Common myeloid progenitor, CD34-positive (primary cell): ENCODE measurements at regions of chr6 and their contacts with region 1.

Region 1: GRCh38 chr6:36851149-36851614 is 11.9 kb upstream of the CPNE5 start:
- DNase-seq: peak; percentile 72 to 83 (median 76)
- H3K4me3 ChIP-seq: no peak overlapping the region
- H3K27ac ChIP-seq: no peak overlapping the region
- H3K4me1 ChIP-seq: peaks cover 12 to 50% (median 21%) of the 10 kb centered on the region in 4 experiments
- H3K27me3 ChIP-seq: peaks cover 0 to 3% (median 0%) of the 10 kb centered on the region in 5 experiments

Region 2: GRCh38 chr6:36765594-36766398 is 85.4 kb before region 1 on chr6:
- CTCF ChIA-PET with region 1: interaction called, 189 read pairs
- POLR2A ChIA-PET with region 1: interaction called, 3 read pairs
- DNase-seq: peak; percentile 85 to 91 (median 87)
- H3K4me3 ChIP-seq: no peak overlapping the region
- H3K27ac ChIP-seq: no peak overlapping the region
- H3K4me1 ChIP-seq: peaks cover 5 to 27% (median 21%) of the 10 kb centered on the region in 4 experiments
- H3K27me3 ChIP-seq: no peaks in the 10 kb centered on the region

Region 3: GRCh38 chr6:36780442-36781177 is 70.6 kb before region 1 on chr6:
- CTCF ChIA-PET with region 1: interaction called, 32 read pairs
- POLR2A ChIA-PET with region 1: interaction called, 3 read pairs
- DNase-seq: peak; percentile 28 to 83 (median 79)
- H3K4me3 ChIP-seq: no peak overlapping the region
- H3K27ac ChIP-seq: no peak overlapping the region
- H3K4me1 ChIP-seq: peaks cover 4 to 28% (median 10%) of the 10 kb centered on the region in 4 experiments
- H3K27me3 ChIP-seq: peaks cover 0 to 5% (median 0%) of the 10 kb centered on the region in 5 experiments

Region 4: GRCh38 chr6:36815962-36816735 is 35.0 kb before region 1 on chr6:
- CTCF ChIA-PET with region 1: interaction called, 15 read pairs
- POLR2A ChIA-PET with region 1: no interaction called
- DNase-seq: no peak
- H3K4me3 ChIP-seq: no peak overlapping the region
- H3K27ac ChIP-seq: no peak overlapping the region
- H3K4me1 ChIP-seq: peaks cover 0 to 7% (median 0%) of the 10 kb centered on the region in 4 experiments
- H3K27me3 ChIP-seq: no peaks in the 10 kb centered on the region

Region 5: DNA sequence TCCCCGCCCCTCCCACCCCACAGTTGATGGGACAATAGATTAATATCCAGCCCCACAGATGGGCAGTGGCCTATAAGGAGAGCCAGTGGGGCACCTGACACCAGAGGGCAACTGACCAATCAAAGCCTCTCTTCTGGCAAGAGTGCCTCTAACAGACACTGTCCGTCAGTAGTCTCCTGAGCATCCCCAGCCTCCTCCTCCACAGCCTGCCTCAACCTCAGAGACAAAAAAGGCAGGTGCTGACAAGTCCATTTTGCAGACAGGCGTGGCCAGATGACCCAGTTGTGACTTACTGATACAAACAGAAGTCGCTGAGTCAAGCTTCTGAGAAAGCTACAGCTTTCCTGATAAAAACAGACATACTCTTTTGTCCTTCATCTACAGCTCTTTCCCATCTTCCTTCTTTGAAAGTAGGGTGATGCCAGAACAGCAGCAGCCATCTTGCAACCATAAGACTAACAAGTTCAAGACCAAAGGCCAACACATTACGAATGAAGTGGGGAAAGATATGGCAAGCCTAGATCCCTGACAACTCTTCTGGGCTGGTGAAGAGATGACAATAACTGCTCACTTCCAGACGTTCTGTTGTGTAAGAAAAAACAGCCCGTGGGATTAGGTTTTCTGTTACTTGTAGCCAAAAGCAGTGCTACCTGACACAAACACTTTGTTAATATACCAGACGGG is 11.1 kb after region 1 on chr6:
- CTCF ChIA-PET with region 1: interaction called, 39 read pairs
- POLR2A ChIA-PET with region 1: no interaction called
- DNase-seq: no peak
- H3K4me3 ChIP-seq: no peak overlapping the region
- H3K27ac ChIP-seq: peak overlapping the region in 1 of 2 experiments; percentile 62
- H3K4me1 ChIP-seq: no peaks in the 10 kb centered on the region
- H3K27me3 ChIP-seq: no peaks in the 10 kb centered on the region